K562 (cell line): ENCODE measurements at regions of chr18 and their contacts with region 1.

Region 1: DNA sequence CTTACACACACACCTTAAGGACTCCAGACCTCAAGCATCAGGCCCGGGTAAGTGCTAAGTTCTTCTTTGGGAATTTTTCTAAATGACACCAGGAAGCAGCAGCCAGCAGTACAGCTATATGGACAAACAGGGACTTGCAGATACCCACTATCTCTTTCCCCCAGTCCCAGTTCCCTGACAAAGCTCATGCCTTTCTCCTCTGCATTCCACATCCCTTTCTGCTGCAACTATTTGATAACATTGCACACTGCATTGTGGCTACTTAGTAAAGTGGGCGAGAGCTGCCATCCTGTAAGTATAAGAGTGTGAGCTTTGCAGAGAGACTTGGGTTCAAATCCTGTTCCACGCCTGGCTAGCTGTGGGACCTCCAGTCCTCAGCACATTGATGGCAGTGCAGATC is 14.0 kb upstream of the CD226 start:
- DNase-seq: peak; percentile 26 to 58 (median 44)
- ATAC-seq: peak; percentile 76
- H3K4me3 ChIP-seq: no peak overlapping the region
- H3K27ac ChIP-seq: peak overlapping the region; percentile 48; the same call in 1 of the 3 replicates
- H3K4me1 ChIP-seq: peaks cover 0 to 17% of the 10 kb centered on the region in 2 experiments; a peak in 2 of 5 replicates
- H3K27me3 ChIP-seq: no peaks in the 10 kb centered on the region
- CTCF ChIP-seq: no peak
- EP300 ChIP-seq: peak; percentile 78
- POLR2A ChIP-seq: no peak
- RAD21 ChIP-seq: no peak

Region 2: DNA sequence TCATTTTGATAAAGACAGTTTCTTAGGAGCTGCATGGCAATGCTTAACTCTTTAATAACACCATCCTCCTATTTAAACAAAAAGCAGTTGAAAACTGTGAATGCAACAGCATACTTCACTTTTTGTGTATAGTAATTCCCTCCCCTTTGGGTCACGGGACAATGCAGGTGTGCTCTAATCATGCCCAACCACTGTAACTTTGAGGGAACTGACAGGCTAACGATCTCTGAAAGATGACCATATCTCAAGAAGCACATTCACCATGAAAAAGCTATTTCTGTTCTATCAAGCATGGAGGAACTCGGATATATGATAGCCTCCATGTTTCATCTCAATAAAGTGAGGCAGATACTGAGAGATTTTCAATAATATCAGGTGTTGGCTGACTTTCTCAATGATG is 67.0 kb after region 1 on chr18:
- CTCF ChIA-PET with region 1: no interaction called
- POLR2A ChIA-PET with region 1: no interaction called
- in situ Hi-C with region 1: no loop called
- intact Hi-C with region 1: loop called (anchors 5 kb)
- DNase-seq: peak in 1 of 4 experiments; percentile 38
- ATAC-seq: no peak
- H3K4me3 ChIP-seq: no peak overlapping the region
- H3K27ac ChIP-seq: no peak overlapping the region; the same call in 2 of the 3 replicates
- H3K4me1 ChIP-seq: peaks cover 0 to 37% of the 10 kb centered on the region in 2 experiments; a peak in 3 of 5 replicates
- H3K27me3 ChIP-seq: no peaks in the 10 kb centered on the region
- CTCF ChIP-seq: no peak
- EP300 ChIP-seq: peak; percentile 62; the same call in 1 of the 2 replicates
- POLR2A ChIP-seq: no peak
- RAD21 ChIP-seq: no peak